HEK293 (cell line): ENCODE measurements at regions of chr5 and their contacts with region 1.

Region 1: GRCh38 chr5:115579747-115580173 is 22.5 kb downstream of the TICAM2 start:
- H3K4me3 ChIP-seq: no peak overlapping the region
- H3K27ac ChIP-seq: no peak overlapping the region
- H3K4me1 ChIP-seq: no peaks in the 10 kb centered on the region
- CTCF ChIP-seq: no peak

Region 2: DNA sequence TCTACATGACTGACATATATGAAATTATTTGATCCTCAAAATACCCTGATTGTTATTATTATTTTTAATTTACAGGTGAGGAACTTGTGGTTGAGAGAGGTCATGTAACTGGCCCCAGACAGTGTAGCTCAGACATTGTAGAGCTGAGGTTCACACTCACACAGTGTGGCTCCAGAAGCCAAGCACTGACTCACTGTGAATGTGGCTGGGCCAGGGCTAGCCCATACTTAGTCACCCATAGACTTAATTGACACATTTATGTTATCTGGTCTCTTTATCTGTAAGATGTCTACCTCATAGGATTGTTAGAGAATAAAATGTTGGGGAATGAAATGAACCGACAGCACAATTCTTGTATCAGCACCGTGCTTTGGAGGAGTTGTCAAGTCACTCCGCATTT is 258.5 kb before region 1 on chr5:
- CTCF ChIA-PET with region 1: interaction called, 10 read pairs
- POLR2A ChIA-PET with region 1: no interaction called
- H3K4me3 ChIP-seq: no peak overlapping the region
- H3K27ac ChIP-seq: no peak overlapping the region
- H3K4me1 ChIP-seq: no peaks in the 10 kb centered on the region
- CTCF ChIP-seq: no peak

Region 3: DNA sequence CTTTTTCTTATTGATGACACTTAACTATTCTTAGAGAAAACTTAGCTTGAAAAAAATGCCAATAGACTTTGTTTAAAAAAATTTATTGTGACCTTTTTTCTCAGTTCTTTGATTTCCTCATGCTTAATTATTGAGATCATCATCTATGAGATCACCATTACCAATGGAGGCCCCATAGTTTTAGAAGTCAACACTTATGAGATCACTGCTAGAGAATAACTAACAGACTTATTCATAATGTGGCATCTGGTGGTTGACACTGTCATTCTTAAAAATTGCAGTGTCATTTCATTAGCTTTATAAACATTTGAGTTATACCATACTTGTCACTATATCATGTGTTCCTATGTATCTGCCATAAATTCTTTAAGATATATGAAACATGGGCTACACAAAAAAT is 20.2 kb before region 1 on chr5:
- CTCF ChIA-PET with region 1: interaction called, 11 read pairs
- POLR2A ChIA-PET with region 1: no interaction called
- H3K4me3 ChIP-seq: no peak overlapping the region
- H3K27ac ChIP-seq: no peak overlapping the region
- H3K4me1 ChIP-seq: no peaks in the 10 kb centered on the region
- CTCF ChIP-seq: no peak